ENCODE measurements at regions of chr22 and their contacts with region 1.

Region 1: DNA sequence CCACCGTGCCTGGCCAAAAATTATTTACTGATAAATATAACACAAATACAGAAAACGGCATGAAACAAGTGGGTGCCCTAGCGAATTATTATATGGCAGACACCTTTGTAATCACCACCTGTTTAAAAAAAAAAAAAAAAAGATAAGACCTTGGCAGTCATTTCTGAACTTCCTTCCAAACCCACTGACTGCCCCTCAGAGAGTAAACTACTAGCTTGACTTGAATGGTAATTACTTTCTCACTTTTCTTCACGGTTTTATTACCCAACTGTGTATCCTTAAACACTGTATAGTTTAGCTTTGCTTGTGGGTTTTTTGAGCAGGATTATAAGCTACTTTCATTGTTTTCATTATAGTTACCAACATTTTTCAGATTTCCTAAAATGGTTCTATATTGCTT is 23.7 kb downstream of the SFI1 start:
- DNase-seq: no peak
- H3K4me3 ChIP-seq: no peak overlapping the region
- H3K27ac ChIP-seq: no peak overlapping the region
- H3K4me1 ChIP-seq: no peaks in the 10 kb centered on the region
- H3K27me3 ChIP-seq: no peaks in the 10 kb centered on the region
- CTCF ChIP-seq: no peak

Region 2: DNA sequence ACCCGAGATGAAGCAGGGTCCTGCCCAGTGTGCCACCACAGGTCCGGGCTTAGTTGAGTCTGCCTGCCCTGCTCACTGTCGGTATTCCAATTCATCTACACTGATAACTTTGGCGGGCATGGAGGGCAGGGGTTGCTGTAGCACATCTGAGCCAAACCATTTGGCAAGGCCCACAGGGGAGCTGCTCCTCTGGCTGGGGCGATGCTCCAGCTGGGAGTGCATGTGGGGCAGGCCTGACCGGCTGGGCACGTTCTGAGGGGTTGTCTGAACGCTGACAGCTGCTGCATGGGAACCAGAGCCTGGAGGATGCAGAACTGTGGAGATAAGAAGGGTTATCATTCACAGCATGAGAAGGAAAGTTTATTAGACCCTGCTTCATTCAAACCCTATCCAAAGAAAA is 80.2 kb before region 1 on chr22:
- CTCF ChIA-PET with region 1: no interaction called
- dilution Hi-C with region 1: loop called (anchors 5 kb)
- in situ Hi-C with region 1: no loop called
- intact Hi-C with region 1: no loop called
- DNase-seq: no peak
- H3K4me3 ChIP-seq: no peak overlapping the region
- H3K27ac ChIP-seq: no peak overlapping the region
- H3K4me1 ChIP-seq: peaks cover 10% of the 10 kb centered on the region
- H3K27me3 ChIP-seq: no peaks in the 10 kb centered on the region
- CTCF ChIP-seq: no peak

Region 3: DNA sequence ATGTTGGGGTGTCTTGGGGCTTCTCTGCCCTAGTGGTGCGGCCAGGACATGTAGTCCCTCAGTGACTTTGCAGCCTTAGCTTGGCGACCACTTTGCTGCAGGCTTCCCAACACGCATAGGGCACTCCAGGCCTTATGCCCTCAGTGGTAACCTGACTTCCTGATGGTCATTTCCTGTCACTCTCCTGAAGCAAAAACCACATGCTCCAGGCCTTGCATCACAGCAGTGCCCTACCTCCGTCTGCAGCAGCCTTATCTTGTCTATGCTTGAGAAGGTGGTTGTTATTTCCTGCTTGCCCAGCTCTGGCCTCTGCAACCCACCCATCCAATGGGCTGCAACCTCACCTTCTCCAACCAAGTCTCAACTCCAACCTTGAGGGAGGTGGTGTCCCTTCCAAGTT is 175.4 kb after region 1 on chr22:
- CTCF ChIA-PET with region 1: no interaction called
- dilution Hi-C with region 1: loop called (anchors 5 kb)
- in situ Hi-C with region 1: no loop called
- intact Hi-C with region 1: no loop called
- DNase-seq: no peak
- H3K4me3 ChIP-seq: no peak overlapping the region
- H3K27ac ChIP-seq: no peak overlapping the region
- H3K4me1 ChIP-seq: peaks cover 3% of the 10 kb centered on the region
- H3K27me3 ChIP-seq: no peaks in the 10 kb centered on the region
- CTCF ChIP-seq: no peak